ENCODE measurements at regions of chr3 and their contacts with region 1.

Region 1: DNA sequence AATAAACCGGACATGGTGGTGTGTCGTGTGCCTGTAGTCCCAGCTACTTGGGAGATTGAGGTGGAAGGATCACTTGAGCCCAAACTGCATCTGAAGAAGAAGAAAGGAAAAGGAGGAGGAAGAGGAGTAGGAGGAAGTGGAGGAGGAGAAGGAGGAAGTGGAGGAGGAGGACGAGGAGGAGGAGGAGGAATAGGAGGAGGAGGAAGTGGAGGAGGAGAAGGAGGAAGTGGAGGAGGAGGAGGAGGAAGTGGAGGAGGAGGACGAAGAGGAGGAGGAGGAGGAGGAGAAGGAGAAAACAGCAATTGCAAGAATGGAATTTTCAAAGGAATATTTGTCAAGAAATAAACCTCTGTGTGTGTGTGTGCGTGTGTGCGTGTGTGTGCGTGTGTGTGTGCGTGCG is 528.6 kb downstream of the CADM2 start:
- DNase-seq: no peak
- H3K4me3 ChIP-seq: no peak overlapping the region
- H3K27ac ChIP-seq: no peak overlapping the region
- H3K4me1 ChIP-seq: no peaks in the 10 kb centered on the region
- H3K27me3 ChIP-seq: no peaks in the 10 kb centered on the region
- CTCF ChIP-seq: no peak
- POLR2A ChIP-seq: no peak

Region 2: GRCh38 chr3:85210540-85210939 is 276.8 kb before region 1 on chr3:
- CTCF ChIA-PET with region 1: no interaction called
- POLR2A ChIA-PET with region 1: no interaction called
- dilution Hi-C with region 1: no loop called
- intact Hi-C with region 1: loop called (anchors 5 kb)
- DNase-seq: no peak
- H3K4me3 ChIP-seq: no peak overlapping the region
- H3K27ac ChIP-seq: no peak overlapping the region
- H3K4me1 ChIP-seq: no peaks in the 10 kb centered on the region
- H3K27me3 ChIP-seq: no peaks in the 10 kb centered on the region
- CTCF ChIP-seq: no peak
- POLR2A ChIP-seq: no peak